B cell (primary cell): ENCODE measurements at regions of chr16 and their contacts with region 1.

Region 1: DNA sequence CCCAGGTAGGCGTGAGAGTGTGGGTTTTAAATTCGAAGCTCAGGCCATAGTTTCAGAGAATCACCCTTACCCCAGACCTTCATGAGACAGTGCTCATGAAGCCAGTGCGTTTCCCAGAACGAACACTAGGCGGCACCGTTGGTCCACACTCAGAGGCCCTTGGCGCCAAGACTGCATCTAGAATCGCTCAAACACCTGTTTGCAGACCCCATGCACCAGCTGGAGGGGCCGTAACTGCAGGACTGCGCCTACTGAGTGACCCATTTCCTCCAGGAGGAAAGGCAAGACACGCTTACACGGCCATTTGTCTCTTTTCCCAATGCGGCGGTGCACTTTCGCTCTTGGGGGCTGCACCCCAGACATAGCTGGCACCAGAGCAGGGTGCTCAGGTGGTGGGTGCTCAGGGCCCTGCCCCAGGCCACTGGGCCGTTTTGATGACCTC is 34.0 kb downstream of the ADGRG5 start:
- DNase-seq: peak; percentile 83
- ATAC-seq: peak; percentile 93
- H3K4me3 ChIP-seq: no peak overlapping the region
- H3K4me3 Mint-ChIP-seq: no peak overlapping the region
- H3K27ac ChIP-seq: no peak overlapping the region
- H3K27ac Mint-ChIP-seq: peak overlapping the region; percentile 39
- H3K4me1 ChIP-seq: peaks cover 0 to 7% of the 10 kb centered on the region in 2 donors
- H3K4me1 Mint-ChIP-seq: peaks cover 18% of the 10 kb centered on the region
- H3K27me3 ChIP-seq: no peaks in the 10 kb centered on the region
- H3K27me3 Mint-ChIP-seq: no peaks in the 10 kb centered on the region
- CTCF ChIP-seq: peak; percentile 95

Region 2: GRCh38 chr16:57475711-57476339 is 100.6 kb before region 1 on chr16:
- CTCF ChIA-PET with region 1: interaction called, 6 read pairs
- POLR2A ChIA-PET with region 1: no interaction called
- intact Hi-C with region 1: loop called (anchors 5 kb)
- DNase-seq: peak; percentile 78
- ATAC-seq: peak; percentile 93
- H3K4me3 ChIP-seq: no peak overlapping the region
- H3K4me3 Mint-ChIP-seq: peak overlapping the region; percentile 65
- H3K27ac ChIP-seq: no peak overlapping the region
- H3K27ac Mint-ChIP-seq: peak overlapping the region; percentile 7
- H3K4me1 ChIP-seq: peaks cover 33 to 48% of the 10 kb centered on the region in 2 donors
- H3K4me1 Mint-ChIP-seq: peaks cover 33% of the 10 kb centered on the region
- H3K27me3 ChIP-seq: peaks cover 0 to 13% (median 0%) of the 10 kb centered on the region in 4 experiments
- H3K27me3 Mint-ChIP-seq: peaks cover 9% of the 10 kb centered on the region
- CTCF ChIP-seq: peak; percentile 87

Region 3: DNA sequence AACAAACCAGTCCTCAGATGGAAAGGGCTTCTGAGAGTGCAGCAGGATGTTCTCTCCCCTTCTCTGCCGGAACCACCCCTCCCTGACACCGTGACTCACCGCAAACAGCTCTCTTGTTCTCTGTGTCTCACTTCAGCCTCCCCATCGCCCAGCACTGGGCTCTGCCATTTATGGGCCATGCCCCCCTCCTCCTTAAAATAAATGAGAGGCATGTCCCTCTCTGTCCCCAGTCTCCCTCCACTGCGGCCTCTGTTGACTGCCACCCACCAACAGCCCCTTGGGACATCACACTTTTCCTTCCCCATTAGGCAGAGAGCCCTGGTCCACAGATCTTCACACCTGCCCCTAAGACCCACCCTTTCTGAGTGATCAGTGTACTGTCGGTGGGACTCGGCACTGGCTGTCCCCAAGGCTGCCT is 46.3 kb before region 1 on chr16:
- CTCF ChIA-PET with region 1: interaction called, 15 read pairs
- POLR2A ChIA-PET with region 1: interaction called, 4 read pairs
- intact Hi-C with region 1: loop called (anchors 2 kb)
- DNase-seq: peak; percentile 75
- ATAC-seq: peak; percentile 72
- H3K4me3 ChIP-seq: peak overlapping the region in 4 of 5 experiments; percentile 4 to 20 (median 10)
- H3K4me3 Mint-ChIP-seq: peak overlapping the region; percentile 86
- H3K27ac ChIP-seq: peak overlapping the region; percentile 73 to 83
- H3K27ac Mint-ChIP-seq: peak overlapping the region; percentile 97
- H3K4me1 ChIP-seq: peaks cover 61 to 66% of the 10 kb centered on the region in 2 donors
- H3K4me1 Mint-ChIP-seq: peaks cover 68% of the 10 kb centered on the region
- H3K27me3 ChIP-seq: no peaks in the 10 kb centered on the region
- H3K27me3 Mint-ChIP-seq: no peaks in the 10 kb centered on the region
- CTCF ChIP-seq: no peak

Region 4: GRCh38 chr16:57544119-57544653 is 32.3 kb before region 1 on chr16:
- CTCF ChIA-PET with region 1: interaction called, 43 read pairs
- POLR2A ChIA-PET with region 1: no interaction called
- intact Hi-C with region 1: loop called (anchors 1 kb)
- DNase-seq: peak; percentile 91
- ATAC-seq: peak; percentile 77
- H3K4me3 ChIP-seq: peak overlapping the region; percentile 59 to 92 (median 84)
- H3K4me3 Mint-ChIP-seq: peak overlapping the region; percentile 76
- H3K27ac ChIP-seq: peak overlapping the region; percentile 5 to 72
- H3K27ac Mint-ChIP-seq: peak overlapping the region; percentile 93
- H3K4me1 ChIP-seq: peaks cover 73 to 83% of the 10 kb centered on the region in 2 donors
- H3K4me1 Mint-ChIP-seq: peaks cover 76% of the 10 kb centered on the region
- H3K27me3 ChIP-seq: no peaks in the 10 kb centered on the region
- H3K27me3 Mint-ChIP-seq: no peaks in the 10 kb centered on the region
- CTCF ChIP-seq: no peak

Region 5: GRCh38 chr16:57564571-57565270 is 11.7 kb before region 1 on chr16:
- CTCF ChIA-PET with region 1: interaction called, 18 read pairs
- POLR2A ChIA-PET with region 1: no interaction called
- intact Hi-C with region 1: no loop called
- DNase-seq: no peak
- ATAC-seq: no peak
- H3K4me3 ChIP-seq: no peak overlapping the region
- H3K4me3 Mint-ChIP-seq: no peak overlapping the region
- H3K27ac ChIP-seq: no peak overlapping the region
- H3K27ac Mint-ChIP-seq: peak overlapping the region; percentile 59
- H3K4me1 ChIP-seq: no peaks in the 10 kb centered on the region
- H3K4me1 Mint-ChIP-seq: peaks cover 15% of the 10 kb centered on the region
- H3K27me3 ChIP-seq: no peaks in the 10 kb centered on the region
- H3K27me3 Mint-ChIP-seq: no peaks in the 10 kb centered on the region
- CTCF ChIP-seq: no peak

Region 6: DNA sequence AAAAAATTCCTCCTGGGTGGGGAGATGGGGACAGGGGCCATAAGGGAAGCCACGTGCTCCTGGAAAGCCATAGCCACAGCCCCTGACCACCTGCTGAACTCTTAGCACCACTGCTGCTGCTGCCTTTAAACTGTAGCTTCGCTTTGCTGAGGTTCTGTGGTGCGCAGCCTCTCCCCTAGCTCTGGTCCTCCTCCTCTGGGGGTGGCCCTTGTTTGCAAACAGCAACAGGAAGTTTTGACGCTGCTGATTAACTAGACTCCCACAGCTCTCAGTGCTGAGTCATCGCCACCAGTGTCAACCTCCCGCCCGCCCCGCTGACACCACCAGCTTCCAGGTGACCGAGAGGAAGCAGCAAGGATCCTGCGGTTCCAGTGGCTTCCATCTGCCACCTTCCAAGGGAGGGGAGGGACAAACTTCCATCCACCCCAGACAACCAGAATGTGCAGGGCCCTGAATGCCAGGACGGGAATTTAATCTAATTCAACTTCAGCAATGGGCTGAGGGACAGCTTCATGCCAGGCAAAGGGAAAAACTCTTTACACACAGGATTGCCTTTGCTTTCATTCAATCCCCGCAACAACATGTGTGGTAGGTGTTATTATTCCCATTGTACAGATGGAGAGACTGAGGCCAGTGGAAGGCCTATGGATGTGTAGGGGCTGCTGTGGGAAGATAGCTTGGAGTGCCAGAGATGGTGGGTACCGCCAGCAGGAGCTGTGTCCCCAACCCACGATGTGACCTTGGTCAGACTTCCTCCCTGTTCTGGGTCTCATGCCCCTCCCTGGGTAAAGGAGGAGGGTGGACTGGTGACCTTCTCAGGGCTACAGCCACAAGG is 234.0 kb after region 1 on chr16:
- CTCF ChIA-PET with region 1: no interaction called
- POLR2A ChIA-PET with region 1: no interaction called
- intact Hi-C with region 1: no loop called
- DNase-seq: no peak
- ATAC-seq: peak; percentile 73
- H3K4me3 ChIP-seq: no peak overlapping the region
- H3K4me3 Mint-ChIP-seq: no peak overlapping the region
- H3K27ac ChIP-seq: no peak overlapping the region
- H3K27ac Mint-ChIP-seq: no peak overlapping the region
- H3K4me1 ChIP-seq: peaks cover 6 to 8% of the 10 kb centered on the region in 2 donors
- H3K4me1 Mint-ChIP-seq: peaks cover 10% of the 10 kb centered on the region
- H3K27me3 ChIP-seq: peaks cover 0 to 24% (median 5%) of the 10 kb centered on the region in 4 experiments
- H3K27me3 Mint-ChIP-seq: peaks cover 36% of the 10 kb centered on the region
- CTCF ChIP-seq: no peak